ENCODE measurements at regions of chr1 and their contacts with region 1.

Region 1: GRCh38 chr1:29181413-29182225 is at the start of gene SRSF4:
- DNase-seq: peak; percentile 99
- H3K4me3 ChIP-seq: peak within 1 kb of the TSS; percentile 79 to 95 (median 89)
- H3K27ac ChIP-seq: peak within 1 kb of the TSS; percentile 97
- H3K4me1 ChIP-seq: peaks cover 2 to 13% (median 6%) of the 10 kb centered on the region in 4 experiments; a peak in 5 of 7 replicates
- H3K27me3 ChIP-seq: no peaks in the 10 kb centered on the region
- CTCF ChIP-seq: peak; percentile 61 to 85 (median 79)
- EP300 ChIP-seq: peak in 1 of 2 experiments; percentile 65; a peak in 1 of 3 replicates
- POLR2A ChIP-seq: peak in 1 of 2 experiments; percentile 77; a peak in 2 of 3 replicates
- RAD21 ChIP-seq: peak; percentile 43 to 55
- total RNA-seq, gene SRSF4: 83.5 and 86.5 TPM in 2 replicates

Region 2: DNA sequence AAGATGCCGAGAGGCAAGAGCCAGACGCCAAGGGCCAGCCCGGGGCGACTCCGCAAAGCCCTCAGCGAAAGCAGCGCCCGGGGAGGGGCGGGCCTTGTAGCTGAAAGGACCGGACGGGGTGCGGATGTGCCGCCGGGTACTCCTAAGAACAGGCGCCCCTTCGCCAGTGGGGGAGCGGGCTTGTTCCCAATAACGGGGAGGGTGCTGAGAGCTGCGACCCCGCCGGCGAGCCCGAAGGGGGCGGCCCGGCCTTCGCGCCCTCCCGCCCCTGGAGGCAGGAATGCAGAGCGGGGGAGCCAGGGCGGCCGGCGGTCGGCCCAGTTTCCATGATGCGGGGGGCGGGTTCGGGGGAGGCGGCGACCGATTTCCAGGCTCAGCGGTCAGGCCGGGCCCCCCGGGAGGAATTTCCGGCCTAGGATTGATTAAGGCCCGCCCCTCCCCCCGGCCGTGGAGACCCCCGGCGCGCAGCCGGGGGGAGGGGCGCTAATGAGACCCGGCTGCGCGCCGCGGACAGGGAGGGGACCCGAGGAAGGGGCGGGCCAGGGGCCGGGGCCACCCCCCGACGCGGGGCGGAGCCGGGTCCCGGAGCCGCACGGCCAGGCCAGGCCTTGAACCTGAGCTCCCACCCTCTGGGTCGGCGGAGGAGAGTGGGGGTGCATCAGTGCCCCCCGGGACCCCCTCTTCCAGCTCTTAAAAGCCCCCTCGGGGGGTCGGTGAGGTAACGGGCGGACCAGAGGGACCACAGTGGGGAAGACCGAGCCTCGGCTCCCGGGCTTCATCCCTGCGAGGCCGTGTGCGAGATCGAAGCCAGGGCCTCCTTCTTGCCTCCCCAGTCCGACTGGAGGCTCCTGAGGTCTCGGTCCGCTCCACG is 57.0 kb before region 1 on chr1:
- CTCF ChIA-PET with region 1: interaction called, 10 read pairs
- POLR2A ChIA-PET with region 1: interaction called, 77 read pairs
- DNase-seq: peak; percentile 66 to 93
- H3K4me3 ChIP-seq: peak overlapping the region; percentile 51 to 91 (median 61)
- H3K27ac ChIP-seq: peak overlapping the region; percentile 48; the same call in 1 of the 2 replicates
- H3K4me1 ChIP-seq: peaks cover 0 to 19% (median 9%) of the 10 kb centered on the region in 4 experiments; a peak in 6 of 7 replicates
- H3K27me3 ChIP-seq: peaks cover 0 to 42% (median 25%) of the 10 kb centered on the region in 4 experiments; a peak in 6 of 7 replicates
- CTCF ChIP-seq: peak in 2 of 3 experiments; percentile 42 to 77; a peak in 3 of 4 replicates
- EP300 ChIP-seq: peak; percentile 36 to 82; a peak in 2 of 3 replicates
- POLR2A ChIP-seq: no peak; a peak in 1 of 3 replicates
- RAD21 ChIP-seq: peak in 1 of 2 experiments; percentile 23; a peak in 2 of 4 replicates

Region 3: GRCh38 chr1:29171089-29171488 is 10.5 kb before region 1 on chr1:
- CTCF ChIA-PET with region 1: interaction called, 12 read pairs
- POLR2A ChIA-PET with region 1: interaction called, 105 read pairs
- DNase-seq: no peak
- H3K4me3 ChIP-seq: no peak overlapping the region
- H3K27ac ChIP-seq: no peak overlapping the region
- H3K4me1 ChIP-seq: peaks cover 3 to 8% (median 6%) of the 10 kb centered on the region in 4 experiments; a peak in 4 of 7 replicates
- H3K27me3 ChIP-seq: no peaks in the 10 kb centered on the region
- CTCF ChIP-seq: no peak
- EP300 ChIP-seq: no peak
- POLR2A ChIP-seq: no peak
- RAD21 ChIP-seq: no peak